Activated CD8-positive, alpha-beta memory T cell treated with anti-CD3 and anti-CD28 coated beads, Interleukin-2, amount 10 ng/mL, durations not matched to agents 7 days and 5 days (primary cell): ENCODE measurements at regions of chr1 and their contacts with region 1.

Region 1: DNA sequence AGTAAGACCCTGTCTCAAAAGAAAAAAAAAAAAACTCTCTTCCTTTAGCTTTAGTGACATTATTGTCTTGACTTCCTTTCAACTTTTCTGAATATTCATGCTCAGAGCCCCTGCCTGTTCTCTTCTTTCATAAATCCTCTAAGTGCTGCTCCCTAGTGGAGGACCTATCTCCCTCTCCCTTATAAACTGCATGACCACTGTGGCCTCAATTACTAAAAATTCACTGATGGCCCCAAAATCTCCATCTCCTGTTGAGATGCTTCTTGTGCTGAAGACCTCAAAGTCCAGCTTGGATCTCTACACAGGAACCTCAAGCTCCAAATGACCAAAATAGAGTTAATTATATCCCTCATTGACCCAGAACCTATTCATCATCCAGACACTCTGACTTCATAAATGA is 7.8 kb downstream of the ITLN1 start:
- DNase-seq: no peak
- ATAC-seq: peak; percentile 76
- H3K4me3 Mint-ChIP-seq: no peak overlapping the region
- H3K27ac Mint-ChIP-seq: peak overlapping the region; percentile 45
- H3K4me1 Mint-ChIP-seq: peaks cover 26% of the 10 kb centered on the region
- H3K27me3 Mint-ChIP-seq: no peaks in the 10 kb centered on the region

Region 2: GRCh38 chr1:160862203-160863060 is 14.8 kb before region 1 on chr1 and contains the start of gene CD244:
- CTCF ChIA-PET with region 1: interaction called, 15 read pairs
- DNase-seq: peak; percentile 95
- ATAC-seq: peak; percentile 92
- H3K4me3 Mint-ChIP-seq: peak within 1 kb of the TSS; percentile 89
- H3K27ac Mint-ChIP-seq: peak within 1 kb of the TSS; percentile 90
- H3K4me1 Mint-ChIP-seq: peaks cover 53% of the 10 kb centered on the region
- H3K27me3 Mint-ChIP-seq: no peaks in the 10 kb centered on the region
- total RNA-seq, gene CD244: 25.6 to 34.5 TPM